ENCODE measurements at regions of chr9 and their contacts with region 1.

Region 1: DNA sequence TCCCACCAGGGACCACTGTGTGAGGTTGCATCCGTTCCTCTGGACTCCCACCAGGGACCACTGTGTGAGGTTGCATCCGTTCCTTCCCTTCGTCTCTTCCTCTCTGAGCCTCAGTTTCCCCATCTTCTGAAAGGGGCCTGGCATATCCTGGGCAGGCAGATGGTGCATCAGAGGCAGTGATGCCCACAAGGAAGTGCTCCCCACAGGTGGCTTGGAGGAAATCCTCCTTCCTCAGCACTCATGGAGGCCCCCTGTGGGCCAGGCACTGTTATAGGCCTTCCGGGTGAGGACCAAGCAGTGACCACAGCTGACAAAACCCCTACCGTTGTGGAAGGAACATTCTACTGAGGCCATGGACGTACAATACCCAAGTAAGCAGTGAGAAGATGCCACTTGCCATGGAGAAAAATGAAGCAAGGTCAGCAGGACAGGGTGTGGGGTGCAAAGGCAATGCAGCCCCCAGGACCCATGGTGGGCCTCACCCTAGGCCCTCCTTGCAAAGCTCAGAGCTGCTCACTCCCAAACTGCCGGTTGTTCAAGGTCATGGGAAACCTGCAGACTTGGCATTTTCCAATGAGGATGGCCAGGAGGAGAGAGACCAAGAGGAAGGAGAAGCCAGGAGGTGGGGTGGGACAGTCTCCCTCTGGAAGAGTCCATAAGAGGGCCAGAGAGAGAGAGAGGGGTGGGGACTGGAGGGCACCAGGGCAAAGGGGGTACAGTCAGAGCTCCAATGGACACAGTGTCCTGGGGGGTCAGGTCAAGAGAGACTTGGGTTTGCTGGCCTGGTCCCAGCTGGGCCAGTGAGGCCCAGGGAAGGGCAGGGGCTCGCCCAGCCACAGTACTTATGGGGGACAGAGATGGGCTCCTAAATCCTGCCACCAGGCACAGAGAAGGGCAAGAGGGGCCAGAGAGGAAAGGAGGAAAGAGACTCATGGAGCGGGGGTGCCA is 51.1 kb downstream of the C9orf50 start:
- DNase-seq: peak; percentile 81
- ATAC-seq: peak; percentile 45
- H3K4me3 ChIP-seq: peak overlapping the region; percentile 34 to 72
- H3K27ac ChIP-seq: peak overlapping the region; percentile 100
- H3K4me1 ChIP-seq: peaks cover 50 to 68% of the 10 kb centered on the region in 2 experiments
- H3K27me3 ChIP-seq: no peaks in the 10 kb centered on the region
- CTCF ChIP-seq: peak in 2 of 3 experiments; percentile 66 to 80; a peak in 4 of 6 replicates
- POLR2A ChIP-seq: peak; percentile 24
- RAD21 ChIP-seq: no peak

Region 2: GRCh38 chr9:129487642-129488409 is 82.0 kb before region 1 on chr9:
- CTCF ChIA-PET with region 1: no interaction called
- POLR2A ChIA-PET with region 1: interaction called, 4 read pairs
- RAD21 ChIA-PET with region 1: no interaction called
- intact Hi-C with region 1: loop called (anchors 1 kb)
- DNase-seq: no peak
- ATAC-seq: peak; percentile 18
- H3K4me3 ChIP-seq: peak overlapping the region; percentile 2 to 58
- H3K27ac ChIP-seq: peak overlapping the region; percentile 100
- H3K4me1 ChIP-seq: peaks cover 86 to 100% of the 10 kb centered on the region in 2 experiments
- H3K27me3 ChIP-seq: no peaks in the 10 kb centered on the region
- CTCF ChIP-seq: no peak
- POLR2A ChIP-seq: peak; percentile 41
- RAD21 ChIP-seq: no peak

Region 3: GRCh38 chr9:129557192-129558036 is 12.4 kb before region 1 on chr9:
- CTCF ChIA-PET with region 1: interaction called, 4 read pairs
- POLR2A ChIA-PET with region 1: interaction called, 15 read pairs
- RAD21 ChIA-PET with region 1: interaction called in 1 of 2 experiments, 6 read pairs
- intact Hi-C with region 1: no loop called
- DNase-seq: peak; percentile 89
- ATAC-seq: peak; percentile 79
- H3K4me3 ChIP-seq: peak overlapping the region; percentile 33 to 45
- H3K27ac ChIP-seq: peak overlapping the region; percentile 97
- H3K4me1 ChIP-seq: peaks cover 90 to 99% of the 10 kb centered on the region in 2 experiments
- H3K27me3 ChIP-seq: no peaks in the 10 kb centered on the region
- CTCF ChIP-seq: no peak
- POLR2A ChIP-seq: peak; percentile 57
- RAD21 ChIP-seq: no peak

Region 4: GRCh38 chr9:129584136-129584535 is 14.4 kb after region 1 on chr9:
- CTCF ChIA-PET with region 1: interaction called, 4 read pairs
- POLR2A ChIA-PET with region 1: interaction called, 14 read pairs
- RAD21 ChIA-PET with region 1: no interaction called
- intact Hi-C with region 1: no loop called
- DNase-seq: peak; percentile 85
- ATAC-seq: peak; percentile 68
- H3K4me3 ChIP-seq: no peak overlapping the region
- H3K27ac ChIP-seq: peak overlapping the region; percentile 51
- H3K4me1 ChIP-seq: peaks cover 33 to 47% of the 10 kb centered on the region in 2 experiments
- H3K27me3 ChIP-seq: no peaks in the 10 kb centered on the region
- CTCF ChIP-seq: no peak
- POLR2A ChIP-seq: no peak
- RAD21 ChIP-seq: no peak

Region 5: DNA sequence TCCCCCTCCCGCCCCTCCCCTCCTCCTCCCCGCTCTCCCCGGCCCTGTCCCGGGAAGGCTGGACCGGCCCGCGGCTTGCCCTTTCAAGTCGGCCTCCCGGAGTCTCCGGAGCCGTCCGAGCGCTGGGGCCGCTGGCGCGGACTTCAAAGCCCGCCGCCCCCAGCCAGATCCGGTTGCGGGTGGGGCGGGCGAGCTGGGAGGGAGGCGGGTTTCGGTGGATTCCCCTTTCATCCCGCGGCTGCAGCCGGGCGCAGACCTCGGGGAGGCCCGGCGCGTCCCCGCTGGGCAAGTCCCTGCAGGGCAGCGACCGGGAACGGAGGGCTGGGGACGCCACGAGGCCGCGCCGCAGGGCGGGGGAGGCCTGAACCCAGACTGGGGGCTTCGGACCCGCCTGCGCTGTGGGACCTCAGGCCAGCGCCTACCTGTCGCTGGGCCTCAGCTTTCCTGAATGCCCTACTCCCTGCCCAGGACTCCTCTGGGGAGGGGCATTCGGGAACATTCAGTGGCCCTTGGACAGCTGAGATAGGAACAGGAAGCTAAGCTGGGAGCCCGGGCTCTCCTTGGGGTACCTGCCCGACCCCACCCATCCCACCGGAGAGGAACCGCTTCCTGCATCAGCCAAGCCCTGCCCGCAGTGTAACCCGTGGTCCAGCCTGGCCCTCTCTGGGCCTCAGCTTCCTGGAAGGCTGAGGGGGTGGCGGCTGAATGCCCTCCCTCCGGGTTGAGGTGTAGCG is 27.7 kb after region 1 on chr9:
- CTCF ChIA-PET with region 1: interaction called, 15 read pairs
- POLR2A ChIA-PET with region 1: interaction called, 13 read pairs
- RAD21 ChIA-PET with region 1: interaction called in 1 of 2 experiments, 6 read pairs
- intact Hi-C with region 1: no loop called
- DNase-seq: peak; percentile 86
- ATAC-seq: peak; percentile 65
- H3K4me3 ChIP-seq: peak overlapping the region; percentile 57 to 67
- H3K27ac ChIP-seq: peak overlapping the region; percentile 98
- H3K4me1 ChIP-seq: peaks cover 82 to 95% of the 10 kb centered on the region in 2 experiments
- H3K27me3 ChIP-seq: no peaks in the 10 kb centered on the region
- CTCF ChIP-seq: no peak
- POLR2A ChIP-seq: no peak
- RAD21 ChIP-seq: no peak

Measured in HCT116 (cell line).